Activated naive CD4-positive, alpha-beta T cell treated with anti-CD3 and anti-CD28 coated beads for 36 hours (primary cell): ENCODE measurements at regions of chr12 and their contacts with region 1.

Region 1: DNA sequence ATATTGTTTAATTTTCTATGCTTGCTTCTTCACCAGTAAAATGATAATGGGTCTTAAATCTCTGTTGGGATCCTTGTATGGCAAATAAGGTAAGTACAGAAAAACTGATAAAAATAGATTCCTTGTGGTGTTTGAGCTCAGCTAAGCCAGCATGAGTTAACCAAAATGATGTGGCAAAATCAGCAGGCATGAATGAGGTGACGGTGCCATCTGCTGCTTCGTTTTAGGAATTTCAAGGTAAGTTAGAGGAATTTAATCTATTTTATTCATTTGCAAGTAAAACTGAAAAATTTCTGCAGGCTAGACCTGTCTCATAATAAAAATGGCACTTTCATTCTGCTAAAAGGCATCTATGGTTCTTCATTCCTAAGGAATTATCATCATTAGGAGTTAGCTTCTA is 10.0 kb upstream of the CLEC7A start:
- DNase-seq: peak; percentile 73
- H3K4me3 Mint-ChIP-seq: no peak overlapping the region
- H3K27ac Mint-ChIP-seq: no peak overlapping the region
- H3K4me1 Mint-ChIP-seq: peaks cover 2% of the 10 kb centered on the region
- H3K27me3 Mint-ChIP-seq: peaks cover 2% of the 10 kb centered on the region

Region 2: DNA sequence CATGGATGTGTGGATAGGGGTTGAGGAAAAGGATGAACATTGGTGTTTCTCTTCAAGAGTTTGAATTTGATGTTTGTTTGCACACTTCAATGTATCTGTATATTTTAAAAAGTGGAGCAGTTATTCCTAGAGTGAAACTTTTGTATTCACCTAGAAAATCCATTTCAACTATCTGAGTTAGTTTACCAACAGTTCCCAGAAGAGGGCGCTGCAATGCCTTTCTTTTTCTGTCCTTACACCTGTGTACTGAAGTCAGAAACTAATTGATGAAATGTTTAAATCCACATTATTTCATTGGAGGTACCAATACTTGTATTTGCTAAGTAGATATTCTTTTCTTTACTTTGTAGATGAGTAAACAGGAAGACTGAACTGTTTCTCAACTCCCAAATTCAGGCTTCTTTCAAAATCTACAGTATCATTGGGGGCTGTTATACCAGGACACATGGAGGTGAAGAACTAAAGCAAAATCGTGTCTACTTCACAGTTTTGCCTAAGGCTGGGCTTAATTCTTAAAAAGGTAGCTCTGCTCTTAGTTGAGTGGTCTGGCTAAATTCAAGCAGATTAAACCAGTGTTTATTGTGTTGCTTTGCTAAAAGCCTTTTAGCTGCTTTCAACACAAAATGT is 505.7 kb before region 1 on chr12:
- CTCF ChIA-PET with region 1: no interaction called
- intact Hi-C with region 1: loop called (anchors 10 kb)
- DNase-seq: peak; percentile 95
- H3K4me3 Mint-ChIP-seq: peak overlapping the region; percentile 55
- H3K27ac Mint-ChIP-seq: peak overlapping the region; percentile 90
- H3K4me1 Mint-ChIP-seq: peaks cover 56% of the 10 kb centered on the region
- H3K27me3 Mint-ChIP-seq: no peaks in the 10 kb centered on the region

Region 3: DNA sequence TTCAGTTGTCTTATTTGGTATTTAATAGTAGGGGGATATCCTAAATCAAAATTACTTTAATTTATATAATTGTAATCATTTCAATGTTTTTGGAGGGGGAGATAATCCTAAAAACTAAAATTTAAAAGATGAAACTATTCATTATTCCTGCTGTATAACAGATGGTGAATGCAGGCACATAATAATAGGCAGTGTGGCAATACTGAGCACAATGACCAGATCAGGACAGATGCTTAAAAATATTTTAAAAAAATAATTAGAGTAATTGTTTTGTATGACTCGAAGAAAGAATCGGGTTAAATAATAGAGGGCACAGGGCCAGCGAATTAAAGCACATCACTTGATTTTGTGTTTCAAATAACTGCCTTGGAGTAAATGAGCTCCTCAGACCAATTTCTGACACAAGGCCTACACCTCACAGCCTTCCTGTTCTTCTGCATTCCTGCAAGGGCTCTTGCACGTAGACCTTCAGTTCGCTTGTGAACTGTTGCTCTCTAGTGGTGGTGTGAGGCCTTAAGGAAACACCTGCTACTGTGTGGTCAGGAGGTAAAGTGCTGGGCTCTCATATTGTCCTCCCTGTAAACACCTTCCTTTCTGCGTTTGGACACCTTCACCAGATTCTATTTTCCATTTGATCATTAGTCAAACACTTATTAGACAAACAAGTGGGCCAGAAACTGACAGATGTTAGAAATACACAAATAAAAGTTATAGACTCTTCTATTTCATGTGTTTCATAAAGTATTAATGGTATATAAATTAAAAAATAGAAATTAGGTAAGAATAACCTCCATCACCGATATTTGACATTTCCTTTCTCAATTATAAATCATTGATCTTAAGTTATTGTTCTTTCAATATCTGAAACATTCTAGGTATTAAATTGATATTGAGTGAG is 342.0 kb before region 1 on chr12:
- CTCF ChIA-PET with region 1: interaction called, 3 read pairs
- intact Hi-C with region 1: loop called (anchors 1 kb)
- DNase-seq: peak; percentile 84
- H3K4me3 Mint-ChIP-seq: peak overlapping the region; percentile 0
- H3K27ac Mint-ChIP-seq: peak overlapping the region; percentile 98
- H3K4me1 Mint-ChIP-seq: peaks cover 40% of the 10 kb centered on the region
- H3K27me3 Mint-ChIP-seq: no peaks in the 10 kb centered on the region

Region 4: DNA sequence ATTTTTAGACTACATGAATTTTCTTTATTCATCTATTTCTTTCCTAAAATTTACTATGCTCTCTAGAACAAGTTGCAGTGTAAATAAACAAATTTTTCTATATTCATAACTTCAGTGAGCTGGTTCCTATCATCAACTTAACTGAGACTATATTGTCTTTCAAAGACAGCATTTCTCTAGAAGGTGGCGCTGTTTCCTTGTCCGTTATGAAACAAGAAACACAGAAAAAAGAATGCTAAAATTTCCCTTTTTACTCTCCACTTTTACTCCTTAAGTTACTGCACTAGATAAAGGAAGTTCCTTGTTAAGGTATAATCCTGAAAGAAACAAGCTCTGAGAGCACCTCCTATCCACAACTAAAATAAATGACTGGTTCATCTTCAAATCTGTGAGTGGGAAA is 199.6 kb before region 1 on chr12:
- CTCF ChIA-PET with region 1: interaction called, 17 read pairs
- intact Hi-C with region 1: loop called (anchors 1 kb)
- DNase-seq: peak; percentile 28
- H3K4me3 Mint-ChIP-seq: no peak overlapping the region
- H3K27ac Mint-ChIP-seq: no peak overlapping the region
- H3K4me1 Mint-ChIP-seq: peaks cover 23% of the 10 kb centered on the region
- H3K27me3 Mint-ChIP-seq: no peaks in the 10 kb centered on the region

Region 5: DNA sequence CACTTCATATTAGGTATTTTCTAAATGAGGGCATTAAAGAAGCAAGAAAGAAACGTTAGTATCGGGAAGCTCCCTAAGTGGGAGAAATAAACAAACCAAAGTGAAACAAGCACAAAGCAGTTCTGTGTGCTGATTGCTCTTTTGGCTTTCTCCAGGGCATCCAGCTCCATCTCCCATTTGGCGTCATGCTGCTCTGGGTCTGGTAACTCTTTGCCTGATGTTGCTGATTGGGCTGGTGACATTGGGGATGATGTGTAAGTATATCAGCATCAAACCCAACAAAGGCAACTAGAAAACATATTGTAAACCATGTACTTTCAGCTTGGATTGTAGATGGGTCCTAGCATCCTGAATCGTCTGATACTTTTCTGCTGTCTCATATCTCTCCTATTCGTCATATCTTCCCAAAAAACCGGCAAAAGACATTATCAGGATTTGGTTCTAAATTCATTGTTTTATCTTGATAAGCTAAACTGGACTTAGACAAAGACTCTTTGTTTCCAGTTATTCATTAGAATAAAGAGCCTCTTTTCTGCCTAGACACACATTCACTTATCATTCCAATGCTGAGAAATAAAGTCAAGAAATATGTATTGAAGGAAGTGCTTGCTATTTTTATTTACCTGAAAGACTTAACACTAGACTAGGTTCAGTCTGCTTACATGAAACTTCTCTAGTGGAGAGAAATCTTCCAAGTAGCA is 127.2 kb before region 1 on chr12:
- CTCF ChIA-PET with region 1: interaction called, 19 read pairs
- intact Hi-C with region 1: loop called (anchors 1 kb)
- DNase-seq: no peak
- H3K4me3 Mint-ChIP-seq: no peak overlapping the region
- H3K27ac Mint-ChIP-seq: no peak overlapping the region
- H3K4me1 Mint-ChIP-seq: no peaks in the 10 kb centered on the region
- H3K27me3 Mint-ChIP-seq: peaks cover 6% of the 10 kb centered on the region

Region 6: GRCh38 chr12:10033783-10034545 is 106.0 kb before region 1 on chr12:
- CTCF ChIA-PET with region 1: interaction called, 14 read pairs
- intact Hi-C with region 1: loop called (anchors 1 kb)
- DNase-seq: no peak
- H3K4me3 Mint-ChIP-seq: no peak overlapping the region
- H3K27ac Mint-ChIP-seq: no peak overlapping the region
- H3K4me1 Mint-ChIP-seq: no peaks in the 10 kb centered on the region
- H3K27me3 Mint-ChIP-seq: no peaks in the 10 kb centered on the region

Region 7: DNA sequence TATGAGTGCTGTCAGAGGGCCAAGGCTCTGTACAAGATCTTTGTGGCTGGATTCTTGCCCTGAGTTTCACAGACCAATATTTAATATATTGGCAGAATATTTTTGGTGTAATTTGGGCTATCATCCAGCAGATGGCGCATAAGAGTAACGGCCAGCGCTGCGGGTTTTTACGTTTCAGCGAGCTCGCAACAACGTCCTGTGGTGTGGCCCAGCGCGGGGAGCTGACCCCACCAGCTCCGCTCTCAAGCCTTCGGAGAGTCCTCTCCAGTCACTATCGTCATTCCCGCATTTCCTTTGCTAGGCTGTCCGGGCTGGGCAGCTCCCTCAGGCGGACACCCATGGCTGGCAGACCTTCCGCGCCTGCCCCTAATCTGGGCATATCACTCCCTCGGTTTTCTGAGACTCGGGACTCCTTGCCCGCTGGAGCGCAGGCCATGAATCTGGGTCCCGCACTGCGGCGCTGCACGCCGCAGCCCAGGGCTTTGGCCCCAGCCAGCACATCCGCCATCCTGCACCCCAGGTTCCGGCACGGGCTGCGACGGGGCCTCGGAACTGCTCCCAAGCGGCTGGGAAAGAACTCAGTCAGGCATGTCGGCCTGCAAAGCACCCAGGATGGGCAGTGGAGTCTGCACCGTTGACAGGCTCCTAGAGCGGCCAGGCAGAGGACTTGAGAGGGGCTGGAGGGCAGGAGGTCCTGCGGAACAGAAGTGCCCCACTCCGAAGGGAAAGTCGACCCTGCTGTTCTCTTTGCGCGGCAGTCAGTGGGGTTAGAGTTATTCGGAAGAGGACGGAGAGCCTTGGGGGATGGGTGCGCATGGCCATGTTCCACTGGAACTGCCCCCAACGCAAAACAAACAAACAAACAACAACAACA is 13.5 kb after region 1 on chr12:
- CTCF ChIA-PET with region 1: interaction called, 13 read pairs
- intact Hi-C with region 1: no loop called
- DNase-seq: peak; percentile 66
- H3K4me3 Mint-ChIP-seq: peak overlapping the region; percentile 76
- H3K27ac Mint-ChIP-seq: peak overlapping the region; percentile 63
- H3K4me1 Mint-ChIP-seq: peaks cover 10% of the 10 kb centered on the region
- H3K27me3 Mint-ChIP-seq: peaks cover 18% of the 10 kb centered on the region